ENCODE measurements at regions of chr1 and their contacts with region 1.

Region 1: GRCh38 chr1:224113918-224114786 is at the start of gene FBXO28:
- DNase-seq: peak; percentile 77
- ATAC-seq: peak; percentile 97
- H3K4me3 ChIP-seq: peak within 1 kb of the TSS; percentile 86
- H3K27ac ChIP-seq: peak within 1 kb of the TSS; percentile 81
- H3K4me1 ChIP-seq: 0 out of 2 replicates have a peak, but pooled peaks cover 2% of the 10 kb centered on the region
- H3K27me3 ChIP-seq: no peaks in the 10 kb centered on the region
- CTCF ChIP-seq: no peak
- EP300 ChIP-seq: no peak
- POLR2A ChIP-seq: peak; percentile 99
- RAD21 ChIP-seq: no peak
- polyA plus RNA-seq, gene FBXO28: 4.3 to 4.5 TPM

Region 2: DNA sequence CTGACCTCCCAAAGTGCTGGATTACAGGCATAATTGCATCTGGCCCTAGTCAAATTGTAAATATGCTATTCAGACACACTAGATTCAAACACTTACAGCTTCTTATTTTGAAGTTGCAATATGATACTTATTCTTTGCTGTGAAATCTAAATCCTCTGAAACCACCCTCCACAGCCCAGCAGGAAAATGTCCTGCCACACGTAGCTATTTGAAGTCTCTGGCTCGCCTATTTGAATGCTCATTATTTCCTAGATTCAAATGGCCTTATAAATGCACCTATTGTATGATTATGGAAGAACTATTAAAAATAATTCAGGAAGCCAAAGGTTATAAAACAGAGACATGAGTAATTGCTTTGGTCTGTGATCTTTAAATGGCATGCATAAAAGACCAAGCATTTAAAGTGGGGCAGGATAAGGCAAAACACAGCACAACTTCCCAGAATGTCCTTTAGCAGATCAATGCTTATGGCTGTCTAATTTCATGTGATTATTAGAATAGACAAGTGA is 26.8 kb before region 1 on chr1:
- CTCF ChIA-PET with region 1: no interaction called
- POLR2A ChIA-PET with region 1: no interaction called
- RAD21 ChIA-PET with region 1: no interaction called
- SMC1A ChIA-PET with region 1: no interaction called
- in situ Hi-C with region 1: no loop called
- intact Hi-C with region 1: no loop called
- DNase-seq: no peak
- ATAC-seq: no peak
- H3K4me3 ChIP-seq: no peak overlapping the region
- H3K27ac ChIP-seq: no peak overlapping the region
- H3K4me1 ChIP-seq: no peaks in the 10 kb centered on the region
- H3K27me3 ChIP-seq: no peaks in the 10 kb centered on the region
- CTCF ChIP-seq: no peak
- EP300 ChIP-seq: no peak
- POLR2A ChIP-seq: no peak
- RAD21 ChIP-seq: no peak

Region 3: GRCh38 chr1:224098007-224098406 is 16.1 kb before region 1 on chr1:
- CTCF ChIA-PET with region 1: no interaction called
- POLR2A ChIA-PET with region 1: no interaction called
- RAD21 ChIA-PET with region 1: no interaction called
- SMC1A ChIA-PET with region 1: no interaction called
- in situ Hi-C with region 1: no loop called
- intact Hi-C with region 1: no loop called
- DNase-seq: no peak
- ATAC-seq: no peak
- H3K4me3 ChIP-seq: no peak overlapping the region
- H3K27ac ChIP-seq: no peak overlapping the region
- H3K4me1 ChIP-seq: no peaks in the 10 kb centered on the region
- H3K27me3 ChIP-seq: peaks cover 0 to 7% of the 10 kb centered on the region in 2 experiments; a peak in 1 of 4 replicates
- CTCF ChIP-seq: no peak
- EP300 ChIP-seq: no peak
- POLR2A ChIP-seq: no peak
- RAD21 ChIP-seq: no peak

Region 4: DNA sequence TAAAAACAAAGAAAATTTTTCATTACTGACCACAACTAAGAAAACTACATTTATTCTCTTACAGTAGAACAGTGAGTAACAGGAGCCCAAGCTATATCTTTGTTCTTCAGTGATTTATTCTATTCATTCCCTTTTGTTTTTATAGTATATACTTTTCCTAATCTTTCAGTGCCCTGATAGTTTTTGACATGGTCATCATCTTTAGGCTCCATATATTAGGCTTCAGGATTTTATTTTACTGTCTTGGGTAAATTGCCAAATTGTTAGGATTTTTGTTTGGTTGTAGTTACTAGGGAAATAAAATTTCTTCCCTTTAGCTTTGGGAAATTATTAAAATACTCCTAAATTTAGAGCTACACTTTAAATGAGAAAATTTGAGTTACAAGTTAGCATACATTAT is 10.1 kb after region 1 on chr1:
- CTCF ChIA-PET with region 1: interaction called, 12 read pairs
- POLR2A ChIA-PET with region 1: no interaction called
- RAD21 ChIA-PET with region 1: interaction called, 3 read pairs
- SMC1A ChIA-PET with region 1: interaction called, 5 read pairs
- in situ Hi-C with region 1: no loop called
- intact Hi-C with region 1: no loop called
- DNase-seq: no peak
- ATAC-seq: no peak
- H3K4me3 ChIP-seq: no peak overlapping the region
- H3K27ac ChIP-seq: no peak overlapping the region
- H3K4me1 ChIP-seq: no peaks in the 10 kb centered on the region
- H3K27me3 ChIP-seq: no peaks in the 10 kb centered on the region
- CTCF ChIP-seq: no peak
- EP300 ChIP-seq: no peak
- POLR2A ChIP-seq: no peak
- RAD21 ChIP-seq: no peak

Region 5: GRCh38 chr1:224245188-224245587 is 131.0 kb after region 1 on chr1:
- CTCF ChIA-PET with region 1: no interaction called
- POLR2A ChIA-PET with region 1: no interaction called
- RAD21 ChIA-PET with region 1: no interaction called
- SMC1A ChIA-PET with region 1: no interaction called
- in situ Hi-C with region 1: no loop called
- intact Hi-C with region 1: no loop called
- DNase-seq: peak; percentile 33
- ATAC-seq: peak; percentile 66
- H3K4me3 ChIP-seq: no peak overlapping the region
- H3K27ac ChIP-seq: no peak overlapping the region
- H3K4me1 ChIP-seq: no peaks in the 10 kb centered on the region
- H3K27me3 ChIP-seq: no peaks in the 10 kb centered on the region
- CTCF ChIP-seq: no peak
- EP300 ChIP-seq: no peak
- POLR2A ChIP-seq: no peak
- RAD21 ChIP-seq: no peak

Measured in GM12878 (cell line).